ENCODE measurements at regions of chr3 and their contacts with region 1.

Region 1: GRCh38 chr3:157159762-157160657 is at the start of gene CCNL1:
- DNase-seq: peak; percentile 99
- total RNA-seq, gene CCNL1: 84.5 to 125 TPM

Region 2: GRCh38 chr3:157174649-157175498 is 14.9 kb after region 1 on chr3:
- intact Hi-C with region 1: loop called in 1 of 2 experiments (anchors 2 kb)
- DNase-seq: peak; percentile 100